GM23248 (cell line): ENCODE measurements at regions of chr2 and their contacts with region 1.

Region 1: DNA sequence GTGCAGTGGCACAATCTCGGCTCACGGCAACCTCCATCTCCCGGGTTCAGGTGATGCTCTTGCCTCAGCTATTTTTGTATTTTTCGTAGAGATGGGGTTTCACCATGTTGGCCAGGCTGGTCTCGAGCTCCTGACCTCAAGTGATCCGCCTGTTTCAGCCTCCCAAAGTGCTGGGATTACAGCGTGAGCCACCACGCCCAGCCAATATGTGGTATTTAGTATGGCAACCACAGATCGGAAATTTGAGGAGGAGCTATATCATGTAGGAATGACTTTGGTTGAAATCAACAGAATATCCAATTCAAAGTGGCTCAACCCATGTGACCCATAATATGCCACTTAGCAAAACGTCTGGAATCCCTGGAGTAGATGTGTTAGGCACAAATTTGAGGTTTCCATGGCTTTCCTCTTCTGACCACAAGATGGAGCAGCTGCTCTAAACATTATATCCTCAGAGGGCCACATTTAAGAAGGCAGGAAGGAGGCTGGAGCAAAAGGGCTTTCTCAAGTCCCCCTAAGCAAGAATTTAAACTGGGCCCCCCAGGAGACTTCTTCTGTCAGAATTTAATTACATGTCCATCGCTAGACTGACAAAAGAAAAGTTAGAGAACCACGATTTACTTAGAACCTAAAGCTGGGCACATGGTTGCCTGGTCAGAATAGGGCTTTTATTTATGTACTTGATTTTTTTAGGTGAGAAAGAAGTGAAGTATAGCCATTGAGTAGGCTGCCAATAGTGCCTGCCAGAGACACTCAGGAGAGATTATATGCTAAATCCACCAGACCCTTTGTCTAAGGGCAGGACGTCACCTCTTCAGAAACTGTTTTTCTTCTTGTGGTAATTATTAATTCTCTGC is 49.6 kb upstream of the ITSN2 start:
- DNase-seq: peak; percentile 82
- H3K4me3 ChIP-seq: no peak overlapping the region
- H3K27ac ChIP-seq: no peak overlapping the region
- H3K4me1 ChIP-seq: no peaks in the 10 kb centered on the region
- H3K27me3 ChIP-seq: peaks cover 8% of the 10 kb centered on the region

Region 2: GRCh38 chr2:22784566-22784965 is 1625.4 kb before region 1 on chr2:
- in situ Hi-C with region 1: no loop called
- DNase-seq: no peak
- H3K4me3 ChIP-seq: no peak overlapping the region
- H3K27ac ChIP-seq: no peak overlapping the region
- H3K4me1 ChIP-seq: no peaks in the 10 kb centered on the region
- H3K27me3 ChIP-seq: no peaks in the 10 kb centered on the region

Region 3: GRCh38 chr2:23734416-23734815 is 675.5 kb before region 1 on chr2:
- in situ Hi-C with region 1: no loop called
- DNase-seq: no peak
- H3K4me3 ChIP-seq: no peak overlapping the region
- H3K27ac ChIP-seq: no peak overlapping the region
- H3K4me1 ChIP-seq: no peaks in the 10 kb centered on the region
- H3K27me3 ChIP-seq: no peaks in the 10 kb centered on the region

Region 4: DNA sequence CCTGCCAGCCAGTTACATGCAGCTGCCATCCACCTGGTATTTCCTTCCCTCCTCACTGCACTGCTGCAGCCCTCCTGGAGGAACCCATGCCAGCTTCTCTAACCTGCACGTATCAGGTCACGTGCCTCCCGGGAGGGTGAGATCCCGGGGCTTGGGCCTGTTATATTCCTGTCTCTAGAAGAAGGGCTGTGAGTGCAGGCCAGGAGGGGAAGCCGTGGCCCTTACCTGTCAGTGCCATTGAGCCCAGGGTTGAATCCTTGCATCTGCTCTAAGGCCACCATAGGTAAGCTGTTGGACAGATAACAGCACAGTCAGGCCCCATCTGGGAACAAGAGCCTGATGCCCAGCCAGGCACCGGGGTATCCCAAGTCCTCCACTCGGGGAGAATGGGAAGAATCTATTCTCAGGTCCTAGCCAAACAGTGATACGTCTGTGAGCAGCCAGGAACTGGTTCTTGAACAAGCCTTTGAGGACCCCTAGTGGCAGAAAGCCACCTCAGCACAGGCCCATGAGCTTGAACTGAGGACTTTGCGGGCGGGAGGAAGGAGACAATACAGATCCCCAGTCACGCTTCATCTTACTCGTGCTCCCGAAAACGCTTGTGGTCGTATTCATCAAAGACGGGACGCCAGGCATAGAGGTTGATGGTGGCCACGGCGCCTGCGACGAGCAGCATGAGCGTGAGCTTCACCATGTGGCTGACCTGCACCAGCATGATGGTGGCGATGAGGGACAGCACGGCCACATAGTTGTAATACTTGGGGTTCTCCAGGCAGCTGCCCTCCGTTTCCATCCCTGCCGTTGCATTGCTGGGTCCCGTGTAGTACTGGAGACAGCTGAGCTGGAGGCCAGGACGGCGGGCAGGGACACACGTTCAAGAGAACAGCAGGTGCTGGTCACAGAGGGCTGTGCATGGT is 417.7 kb after region 1 on chr2:
- in situ Hi-C with region 1: loop called (anchors 10 kb)
- DNase-seq: peak; percentile 90
- H3K4me3 ChIP-seq: no peak overlapping the region
- H3K27ac ChIP-seq: no peak overlapping the region
- H3K4me1 ChIP-seq: no peaks in the 10 kb centered on the region
- H3K27me3 ChIP-seq: no peaks in the 10 kb centered on the region

Region 5: GRCh38 chr2:24971536-24972314 is 561.8 kb after region 1 on chr2 and contains the start of gene DNAJC27:
- in situ Hi-C with region 1: loop called (anchors 25 kb)
- DNase-seq: peak; percentile 99
- H3K4me3 ChIP-seq: peak within 1 kb of the TSS; percentile 97
- H3K27ac ChIP-seq: peak within 1 kb of the TSS; percentile 98
- H3K4me1 ChIP-seq: peaks cover 7% of the 10 kb centered on the region; the same call in 1 of the 2 replicates
- H3K27me3 ChIP-seq: no peaks in the 10 kb centered on the region
- total RNA-seq, gene DNAJC27: 0.76 and 1.3 TPM in 2 replicates

Region 6: DNA sequence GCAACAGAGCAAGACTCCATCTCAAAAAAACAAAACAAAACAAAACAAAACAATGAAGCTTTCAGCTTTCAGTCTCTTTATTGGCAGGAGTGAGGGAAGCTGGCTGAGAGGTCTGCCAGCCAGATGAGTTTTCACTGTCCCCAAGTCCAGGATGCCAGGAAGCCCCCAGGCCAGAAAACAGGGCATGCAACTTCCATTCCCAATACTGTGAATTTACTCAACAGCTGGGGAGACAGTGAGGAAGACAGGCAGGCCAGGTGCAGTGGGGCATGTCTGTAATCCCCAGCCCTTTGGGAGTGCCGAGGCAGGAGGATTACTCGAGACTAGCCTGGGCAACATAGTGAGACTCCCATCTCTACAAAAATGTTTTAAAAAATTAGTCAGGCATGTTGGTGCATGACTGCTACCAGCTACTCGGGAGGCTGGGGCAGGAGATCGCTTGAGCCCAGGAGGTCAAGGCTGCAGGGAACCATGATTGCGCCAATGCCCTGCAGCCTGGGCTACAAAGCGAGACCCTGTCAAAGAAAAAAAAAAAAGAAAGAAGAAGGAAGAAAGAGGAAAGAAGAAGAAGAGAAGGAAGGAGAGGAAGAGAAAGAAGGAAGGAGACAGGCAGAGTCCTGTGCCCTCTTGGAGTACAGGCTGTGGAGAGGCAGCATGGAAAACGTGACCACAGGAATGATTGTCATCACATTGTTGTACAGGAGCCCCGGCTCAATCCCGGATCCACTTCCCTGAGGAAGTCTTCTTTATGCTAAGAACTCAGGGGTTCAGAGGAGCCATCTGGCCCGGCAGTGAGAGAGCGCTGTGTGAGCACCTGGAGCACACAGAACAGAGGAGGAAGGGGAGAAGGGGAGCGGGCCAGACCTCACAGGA is 787.6 kb after region 1 on chr2:
- in situ Hi-C with region 1: loop called (anchors 25 kb)
- DNase-seq: peak; percentile 25
- H3K4me3 ChIP-seq: no peak overlapping the region
- H3K27ac ChIP-seq: no peak overlapping the region
- H3K4me1 ChIP-seq: no peaks in the 10 kb centered on the region
- H3K27me3 ChIP-seq: no peaks in the 10 kb centered on the region; the same call in 1 of the 2 replicates